Mammary epithelial cell (primary cell): ENCODE measurements at regions of chr14 and their contacts with region 1.

Region 1: GRCh38 chr14:105527661-105528581 is 1.5 kb downstream of the TMEM121 start:
- DNase-seq: peak; percentile 51
- H3K4me3 ChIP-seq: peak overlapping the region; percentile 33 to 62 (median 52)
- H3K27ac ChIP-seq: no peak overlapping the region
- H3K4me1 ChIP-seq: peaks cover 22% of the 10 kb centered on the region
- H3K27me3 ChIP-seq: no peaks in the 10 kb centered on the region
- CTCF ChIP-seq: peak; percentile 62 to 80

Region 2: GRCh38 chr14:105369653-105370040 is 158.3 kb before region 1 on chr14:
- CTCF ChIA-PET with region 1: no interaction called
- dilution Hi-C with region 1: no loop called
- in situ Hi-C with region 1: no loop called
- intact Hi-C with region 1: loop called (anchors 1 kb)
- DNase-seq: no peak
- H3K4me3 ChIP-seq: no peak overlapping the region
- H3K27ac ChIP-seq: no peak overlapping the region
- H3K4me1 ChIP-seq: peaks cover 6% of the 10 kb centered on the region
- H3K27me3 ChIP-seq: no peaks in the 10 kb centered on the region
- CTCF ChIP-seq: no peak

Region 3: GRCh38 chr14:105375635-105376057 is 152.3 kb before region 1 on chr14:
- CTCF ChIA-PET with region 1: no interaction called
- dilution Hi-C with region 1: no loop called
- in situ Hi-C with region 1: no loop called
- intact Hi-C with region 1: loop called (anchors 1 kb)
- DNase-seq: no peak
- H3K4me3 ChIP-seq: no peak overlapping the region
- H3K27ac ChIP-seq: no peak overlapping the region
- H3K4me1 ChIP-seq: peaks cover 3% of the 10 kb centered on the region
- H3K27me3 ChIP-seq: no peaks in the 10 kb centered on the region
- CTCF ChIP-seq: no peak

Region 4: GRCh38 chr14:105448706-105449111 is 79.2 kb before region 1 on chr14:
- CTCF ChIA-PET with region 1: no interaction called
- dilution Hi-C with region 1: no loop called
- in situ Hi-C with region 1: no loop called
- intact Hi-C with region 1: loop called (anchors 1 kb)
- DNase-seq: peak; percentile 14
- H3K4me3 ChIP-seq: no peak overlapping the region
- H3K27ac ChIP-seq: no peak overlapping the region
- H3K4me1 ChIP-seq: no peaks in the 10 kb centered on the region
- H3K27me3 ChIP-seq: no peaks in the 10 kb centered on the region
- CTCF ChIP-seq: peak; percentile 56 to 83

Region 5: DNA sequence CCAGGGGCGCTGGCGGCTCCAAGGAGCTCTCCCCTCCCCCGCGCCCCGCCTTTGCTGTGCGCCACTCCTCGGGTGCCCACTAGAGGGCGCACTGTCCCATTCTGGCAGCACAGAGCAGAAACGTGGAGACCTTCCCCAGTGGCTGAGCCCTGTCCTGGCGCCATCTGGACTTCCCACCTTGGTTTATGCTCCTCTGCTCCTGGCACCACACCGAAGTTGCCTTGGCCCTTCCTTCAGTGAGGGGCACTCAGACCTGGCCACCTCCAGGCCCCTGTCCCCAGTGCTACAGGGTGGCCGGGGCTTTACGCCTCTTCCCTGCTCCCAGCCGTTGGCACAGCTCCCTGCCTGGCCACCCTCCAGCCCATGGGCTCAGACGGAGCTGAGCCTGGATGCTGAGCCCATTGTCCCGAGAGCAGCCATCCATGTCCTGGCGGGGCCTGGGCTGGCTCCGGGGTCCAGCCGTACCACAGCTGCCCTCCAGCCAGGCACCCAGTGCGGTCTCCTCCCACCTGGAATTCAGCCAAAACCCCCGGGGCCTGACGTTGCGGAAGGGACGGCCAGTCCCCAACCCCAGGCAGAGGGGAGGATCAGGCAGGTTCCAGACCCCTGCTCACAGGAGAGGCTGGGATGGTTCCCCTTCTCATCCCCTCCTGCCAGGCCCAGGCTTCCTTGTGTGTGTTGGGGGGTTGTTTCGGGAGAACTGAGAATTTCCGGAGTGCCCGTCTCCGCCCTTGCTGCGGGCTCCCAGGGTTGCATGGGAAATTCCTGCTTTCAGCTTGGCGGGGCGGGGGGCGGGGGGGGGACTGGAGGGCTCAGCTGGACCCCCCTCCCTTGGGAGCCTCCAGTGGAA is 46.7 kb before region 1 on chr14:
- CTCF ChIA-PET with region 1: no interaction called
- dilution Hi-C with region 1: no loop called
- in situ Hi-C with region 1: no loop called
- intact Hi-C with region 1: loop called (anchors 2 kb)
- DNase-seq: peak; percentile 80
- H3K4me3 ChIP-seq: peak overlapping the region in 2 of 3 experiments; percentile 8 to 30
- H3K27ac ChIP-seq: peak overlapping the region; percentile 96
- H3K4me1 ChIP-seq: peaks cover 50% of the 10 kb centered on the region
- H3K27me3 ChIP-seq: no peaks in the 10 kb centered on the region
- CTCF ChIP-seq: peak; percentile 93 to 99

Region 6: DNA sequence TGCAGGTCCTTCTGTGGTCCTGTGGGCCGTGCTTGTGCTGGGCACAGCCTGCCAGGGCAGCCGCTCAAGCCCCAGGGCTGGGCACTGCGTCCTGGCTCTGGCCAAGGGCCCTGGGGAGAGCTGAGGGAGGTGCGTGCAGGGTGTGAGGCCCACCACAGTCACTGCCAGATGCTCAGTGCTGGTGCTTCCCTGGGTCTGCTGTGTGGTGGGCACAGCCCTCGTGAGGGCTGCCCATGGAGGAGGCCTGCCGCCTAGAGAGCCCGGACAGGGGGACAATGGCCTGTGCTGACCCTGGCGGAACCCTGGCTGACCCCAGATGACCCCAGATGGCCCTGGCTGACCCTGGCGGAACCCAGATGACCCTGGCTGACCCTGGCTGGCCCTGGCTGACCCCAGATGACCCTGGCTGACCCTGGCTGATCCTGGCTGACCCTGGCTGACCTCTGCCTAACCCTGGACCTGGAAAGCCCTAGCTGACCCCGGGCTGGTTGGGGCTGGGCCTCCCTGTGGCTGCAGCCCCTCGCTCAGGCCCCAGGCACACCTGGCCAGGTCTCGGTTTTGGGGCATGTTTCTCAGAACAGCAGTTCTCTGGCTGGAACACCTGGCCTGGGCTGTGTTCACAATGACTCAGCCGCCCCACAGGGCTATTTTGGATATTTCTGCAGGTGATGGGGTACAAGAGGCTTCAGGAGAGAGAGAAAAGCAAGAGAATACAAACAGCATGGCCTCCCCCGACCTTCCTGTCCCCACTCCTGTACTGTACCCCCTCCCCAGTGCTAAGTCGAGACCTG is 53.8 kb after region 1 on chr14:
- CTCF ChIA-PET with region 1: no interaction called
- dilution Hi-C with region 1: no loop called
- in situ Hi-C with region 1: no loop called
- intact Hi-C with region 1: no loop called
- DNase-seq: no peak
- H3K4me3 ChIP-seq: no peak overlapping the region
- H3K27ac ChIP-seq: no peak overlapping the region
- H3K4me1 ChIP-seq: no peaks in the 10 kb centered on the region
- H3K27me3 ChIP-seq: no peaks in the 10 kb centered on the region
- CTCF ChIP-seq: no peak

Region 7: GRCh38 chr14:105700622-105701288 is 172.8 kb after region 1 on chr14:
- CTCF ChIA-PET with region 1: no interaction called
- dilution Hi-C with region 1: no loop called
- in situ Hi-C with region 1: no loop called
- intact Hi-C with region 1: no loop called
- DNase-seq: no peak
- H3K4me3 ChIP-seq: no peak overlapping the region
- H3K27ac ChIP-seq: no peak overlapping the region
- H3K4me1 ChIP-seq: no peaks in the 10 kb centered on the region
- H3K27me3 ChIP-seq: no peaks in the 10 kb centered on the region
- CTCF ChIP-seq: no peak

Region 8: DNA sequence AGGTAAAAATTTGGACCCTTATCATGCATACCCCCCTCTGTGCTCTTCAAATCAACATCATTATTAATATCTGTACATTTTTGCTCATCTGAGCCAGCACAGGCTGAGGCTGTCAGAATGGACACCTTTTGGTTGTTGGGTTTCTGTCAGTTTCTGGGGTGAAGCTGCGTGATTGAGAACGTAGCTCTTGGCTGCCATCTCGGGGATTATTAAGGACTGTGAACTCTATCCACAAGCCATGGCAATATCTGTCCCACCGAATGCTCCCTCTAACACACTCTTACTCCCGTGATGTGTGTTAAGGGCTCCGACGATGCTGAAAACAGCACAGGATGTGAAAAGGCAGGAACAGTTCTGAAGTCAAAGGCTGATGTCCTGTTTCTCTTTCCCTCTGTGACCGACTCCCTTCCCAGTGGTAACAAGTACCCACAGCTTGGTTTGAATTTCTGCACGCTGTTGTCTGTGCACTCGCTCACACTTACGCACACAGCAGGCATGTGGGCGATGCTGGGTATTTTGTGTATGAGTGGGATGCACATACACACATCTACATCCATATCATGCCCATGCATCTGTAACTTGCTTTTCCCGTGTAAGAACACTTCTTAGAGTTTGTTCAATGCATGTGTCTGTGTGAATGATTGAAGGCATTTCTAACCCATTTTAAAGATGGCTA is 404.0 kb after region 1 on chr14:
- CTCF ChIA-PET with region 1: no interaction called
- dilution Hi-C with region 1: no loop called
- in situ Hi-C with region 1: no loop called
- intact Hi-C with region 1: no loop called
- DNase-seq: no peak
- H3K4me3 ChIP-seq: no peak overlapping the region
- H3K27ac ChIP-seq: no peak overlapping the region
- H3K4me1 ChIP-seq: no peaks in the 10 kb centered on the region
- H3K27me3 ChIP-seq: no peaks in the 10 kb centered on the region
- CTCF ChIP-seq: no peak